Activated B cell treated with CpG ODN at 0.5 μM for 24 hours (primary cell): ENCODE measurements at regions of chr11 and their contacts with region 1.

Region 1: GRCh38 chr11:95254131-95254704 is 23.2 kb upstream of the SESN3 start:
- DNase-seq: peak; percentile 54
- ATAC-seq: peak; percentile 94
- H3K4me3 Mint-ChIP-seq: peak overlapping the region; percentile 75
- H3K27ac Mint-ChIP-seq: peak overlapping the region; percentile 91
- H3K4me1 Mint-ChIP-seq: peaks cover 81% of the 10 kb centered on the region
- H3K27me3 Mint-ChIP-seq: no peaks in the 10 kb centered on the region
- CTCF ChIP-seq: no peak

Region 2: GRCh38 chr11:94002226-94002625 is 1252.0 kb before region 1 on chr11:
- CTCF ChIA-PET with region 1: no interaction called
- POLR2A ChIA-PET with region 1: no interaction called
- intact Hi-C with region 1: no loop called
- DNase-seq: no peak
- ATAC-seq: no peak
- H3K4me3 Mint-ChIP-seq: no peak overlapping the region
- H3K27ac Mint-ChIP-seq: no peak overlapping the region
- H3K4me1 Mint-ChIP-seq: no peaks in the 10 kb centered on the region
- H3K27me3 Mint-ChIP-seq: no peaks in the 10 kb centered on the region
- CTCF ChIP-seq: no peak

Region 3: GRCh38 chr11:95084509-95084908 is 169.7 kb before region 1 on chr11:
- CTCF ChIA-PET with region 1: no interaction called
- POLR2A ChIA-PET with region 1: no interaction called
- intact Hi-C with region 1: no loop called
- DNase-seq: no peak
- ATAC-seq: no peak
- H3K4me3 Mint-ChIP-seq: no peak overlapping the region
- H3K27ac Mint-ChIP-seq: no peak overlapping the region
- H3K4me1 Mint-ChIP-seq: peaks cover 11% of the 10 kb centered on the region
- H3K27me3 Mint-ChIP-seq: no peaks in the 10 kb centered on the region
- CTCF ChIP-seq: no peak

Region 4: DNA sequence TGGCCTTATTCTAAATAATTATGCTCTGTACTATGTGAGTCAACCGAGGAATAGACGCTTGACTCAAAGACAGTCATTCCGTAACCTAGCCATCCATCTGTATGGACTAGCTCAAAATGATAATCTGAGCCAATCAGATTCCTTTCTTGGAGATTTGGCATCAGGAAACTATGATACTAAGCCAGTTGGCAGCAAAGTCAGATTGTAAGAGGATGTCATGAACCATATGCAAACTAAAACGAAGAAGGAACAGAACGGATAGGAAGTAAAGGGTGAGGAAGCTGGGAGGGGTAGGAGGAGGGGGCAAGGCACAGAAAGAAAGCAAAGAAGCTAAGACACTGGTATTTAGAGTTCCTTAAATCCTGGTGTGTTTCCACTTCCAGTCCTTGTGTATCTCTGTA is 12.5 kb before region 1 on chr11:
- CTCF ChIA-PET with region 1: interaction called, 4 read pairs
- POLR2A ChIA-PET with region 1: interaction called, 18 read pairs
- intact Hi-C with region 1: loop called (anchors 1 kb)
- DNase-seq: no peak
- ATAC-seq: peak; percentile 75
- H3K4me3 Mint-ChIP-seq: peak overlapping the region; percentile 60
- H3K27ac Mint-ChIP-seq: peak overlapping the region; percentile 90
- H3K4me1 Mint-ChIP-seq: peaks cover 39% of the 10 kb centered on the region
- H3K27me3 Mint-ChIP-seq: no peaks in the 10 kb centered on the region
- CTCF ChIP-seq: no peak

Region 5: GRCh38 chr11:95279921-95280868 is 26.0 kb after region 1 on chr11:
- CTCF ChIA-PET with region 1: no interaction called
- POLR2A ChIA-PET with region 1: interaction called, 6 read pairs
- intact Hi-C with region 1: loop called (anchors 2 kb)
- DNase-seq: peak; percentile 24
- ATAC-seq: peak; percentile 84
- H3K4me3 Mint-ChIP-seq: peak overlapping the region; percentile 39
- H3K27ac Mint-ChIP-seq: peak overlapping the region; percentile 85
- H3K4me1 Mint-ChIP-seq: peaks cover 49% of the 10 kb centered on the region
- H3K27me3 Mint-ChIP-seq: no peaks in the 10 kb centered on the region
- CTCF ChIP-seq: no peak